CD14-positive monocyte (primary cell): ENCODE measurements at regions of chr2 and their contacts with region 1.

Region 1: DNA sequence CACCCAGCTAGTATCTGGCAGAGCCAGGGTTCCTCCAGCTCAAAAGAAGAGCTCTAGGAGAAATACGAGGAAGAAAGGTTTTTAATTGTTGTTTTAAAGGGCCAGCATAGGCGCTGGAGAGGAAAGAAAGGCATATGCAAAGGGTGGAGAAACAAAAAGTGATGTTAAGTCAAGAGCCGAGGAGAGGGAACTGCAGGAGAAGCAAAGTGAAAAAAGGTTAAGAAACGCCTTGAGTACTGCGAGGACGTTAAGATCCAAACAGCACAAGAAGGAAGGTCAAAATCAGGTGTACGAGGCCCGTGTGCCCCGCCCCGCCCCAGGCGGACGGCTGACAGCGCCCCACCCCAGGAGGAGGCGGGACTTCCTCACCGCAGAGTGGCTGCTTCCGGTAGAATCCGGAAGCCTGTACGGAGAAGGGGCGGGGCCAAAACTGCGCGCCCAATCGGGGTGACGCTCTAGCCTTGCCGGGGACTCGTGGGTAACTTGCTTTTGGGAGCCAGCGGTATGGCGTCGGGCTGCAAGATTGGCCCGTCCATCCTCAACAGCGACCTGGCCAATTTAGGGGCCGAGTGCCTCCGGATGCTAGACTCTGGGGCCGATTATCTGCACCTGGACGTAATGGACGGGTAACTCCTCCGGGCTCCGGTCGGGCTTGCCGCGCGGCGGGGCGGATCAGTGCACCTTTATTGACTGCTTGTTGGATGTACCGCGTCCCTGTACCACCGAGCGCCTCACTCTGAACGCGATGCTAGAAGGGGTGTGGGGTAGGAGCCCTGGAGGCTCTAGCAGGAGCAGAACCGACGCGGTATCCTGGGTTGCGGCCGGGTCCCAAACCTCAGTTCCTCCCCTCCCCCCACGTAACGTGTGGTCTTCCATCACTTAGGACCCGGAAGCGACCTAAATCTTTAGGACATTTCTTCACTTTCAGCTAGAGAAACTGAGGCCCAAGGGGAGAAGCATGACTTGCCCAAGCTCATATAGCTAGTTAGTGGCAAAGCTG is at the start of gene RPE:
- DNase-seq: peak; percentile 95 to 97 (median 95)
- H3K4me3 ChIP-seq: peak within 1 kb of the TSS; percentile 85 to 99 (median 98)
- H3K4me3 Mint-ChIP-seq: peak within 1 kb of the TSS; percentile 92 to 97
- H3K27ac ChIP-seq: peak within 1 kb of the TSS; percentile 87 to 92
- H3K27ac Mint-ChIP-seq: peak within 1 kb of the TSS; percentile 90 to 97 (median 94)
- H3K4me1 ChIP-seq: peaks cover 43 to 45% of the 10 kb centered on the region in 2 donors
- H3K4me1 Mint-ChIP-seq: peaks cover 50% of the 10 kb centered on the region
- H3K27me3 ChIP-seq: no peaks in the 10 kb centered on the region
- H3K27me3 Mint-ChIP-seq: peaks cover 0 to 1% (median 0%) of the 10 kb centered on the region in 3 donors
- CTCF ChIP-seq: no peak
- polyA plus RNA-seq, gene RPE: 32.3 to 38.1 (median 33.8) TPM

Region 2: GRCh38 chr2:210171309-210172203 is 169.1 kb after region 1 on chr2 and contains the start of gene KANSL1L:
- intact Hi-C with region 1: loop called (anchors 2 to 5 kb)
- DNase-seq: peak; percentile 94 to 96 (median 94)
- H3K4me3 ChIP-seq: peak within 1 kb of the TSS; percentile 96 to 98 (median 97)
- H3K4me3 Mint-ChIP-seq: peak within 1 kb of the TSS; percentile 97 to 99
- H3K27ac ChIP-seq: peak within 1 kb of the TSS; percentile 97 to 99
- H3K27ac Mint-ChIP-seq: peak within 1 kb of the TSS; percentile 99 to 100 (median 100)
- H3K4me1 ChIP-seq: peaks cover 9 to 25% of the 10 kb centered on the region in 2 donors
- H3K4me1 Mint-ChIP-seq: peaks cover 22% of the 10 kb centered on the region
- H3K27me3 ChIP-seq: peaks cover 6 to 8% of the 10 kb centered on the region in 2 donors
- H3K27me3 Mint-ChIP-seq: peaks cover 8 to 16% (median 8%) of the 10 kb centered on the region in 3 donors
- CTCF ChIP-seq: no peak
- polyA plus RNA-seq, gene KANSL1L: 1.00 to 11.6 (median 1.3) TPM